GM12878 (cell line): ENCODE measurements at regions of chr22 and their contacts with region 1.

Region 1: GRCh38 chr22:33302049-33302545 is 243.9 kb upstream of the SYN3 start:
- DNase-seq: peak; percentile 39
- ATAC-seq: peak; percentile 71
- H3K4me3 ChIP-seq: no peak overlapping the region
- H3K27ac ChIP-seq: no peak overlapping the region
- H3K4me1 ChIP-seq: peaks cover 50% of the 10 kb centered on the region
- H3K27me3 ChIP-seq: no peaks in the 10 kb centered on the region
- CTCF ChIP-seq: peak; percentile 96 to 99 (median 97); a peak in 5 of 6 replicates
- EP300 ChIP-seq: no peak
- POLR2A ChIP-seq: no peak
- RAD21 ChIP-seq: peak; percentile 99

Region 2: GRCh38 chr22:33271390-33272161 is 30.5 kb before region 1 on chr22:
- CTCF ChIA-PET with region 1: interaction called, 157 read pairs
- POLR2A ChIA-PET with region 1: interaction called, 9 read pairs
- RAD21 ChIA-PET with region 1: interaction called, 167 read pairs
- SMC1A ChIA-PET with region 1: interaction called, 156 read pairs
- in situ Hi-C with region 1: no loop called
- intact Hi-C with region 1: loop called (anchors 1 kb)
- DNase-seq: peak; percentile 95
- ATAC-seq: peak; percentile 86
- H3K4me3 ChIP-seq: peak overlapping the region; percentile 3; the same call in 1 of the 2 replicates
- H3K27ac ChIP-seq: peak overlapping the region; percentile 88
- H3K4me1 ChIP-seq: peaks cover 56% of the 10 kb centered on the region
- H3K27me3 ChIP-seq: no peaks in the 10 kb centered on the region
- CTCF ChIP-seq: no peak
- EP300 ChIP-seq: peak; percentile 61 to 86; a peak in 3 of 4 replicates
- POLR2A ChIP-seq: no peak
- RAD21 ChIP-seq: 0 out of 2 replicates have a peak, but pooled peaks have one; percentile 0

Region 3: DNA sequence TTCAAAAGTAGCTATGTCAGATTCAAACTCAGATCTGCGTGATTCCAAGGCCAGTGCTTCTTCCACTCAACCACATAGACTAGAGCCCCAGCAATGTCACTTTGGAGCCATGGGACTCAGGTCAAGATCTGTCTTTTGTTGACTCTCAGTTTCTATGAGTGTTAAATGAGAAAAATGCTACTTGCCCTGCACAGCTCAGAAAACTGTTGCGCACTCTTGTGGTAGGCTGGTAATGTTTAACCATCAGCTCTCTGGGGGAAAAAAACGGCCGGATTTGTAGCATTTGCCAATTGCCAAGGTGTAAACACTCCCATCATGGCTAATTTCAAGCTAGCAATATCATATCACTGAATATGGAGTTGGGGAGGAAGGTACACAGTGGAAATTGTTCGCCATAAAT is 84.2 kb after region 1 on chr22:
- CTCF ChIA-PET with region 1: interaction called, 25 read pairs
- POLR2A ChIA-PET with region 1: no interaction called
- RAD21 ChIA-PET with region 1: interaction called, 6 read pairs
- SMC1A ChIA-PET with region 1: interaction called, 13 read pairs
- in situ Hi-C with region 1: no loop called
- intact Hi-C with region 1: loop called (anchors 2 kb)
- DNase-seq: no peak
- ATAC-seq: peak; percentile 73
- H3K4me3 ChIP-seq: no peak overlapping the region
- H3K27ac ChIP-seq: no peak overlapping the region
- H3K4me1 ChIP-seq: no peaks in the 10 kb centered on the region
- H3K27me3 ChIP-seq: no peaks in the 10 kb centered on the region
- CTCF ChIP-seq: peak in 1 of 3 experiments; percentile 8; a peak in 1 of 6 replicates
- EP300 ChIP-seq: no peak
- POLR2A ChIP-seq: no peak
- RAD21 ChIP-seq: no peak

Region 4: GRCh38 chr22:33519071-33519973 is 217.2 kb after region 1 on chr22:
- CTCF ChIA-PET with region 1: interaction called, 95 read pairs
- POLR2A ChIA-PET with region 1: no interaction called
- RAD21 ChIA-PET with region 1: interaction called, 32 read pairs
- SMC1A ChIA-PET with region 1: interaction called, 92 read pairs
- in situ Hi-C with region 1: loop called (anchors 5 kb)
- intact Hi-C with region 1: loop called (anchors 1 kb)
- DNase-seq: peak; percentile 37
- ATAC-seq: peak; percentile 78
- H3K4me3 ChIP-seq: no peak overlapping the region
- H3K27ac ChIP-seq: peak overlapping the region; percentile 45; the same call in 1 of the 2 replicates
- H3K4me1 ChIP-seq: peaks cover 27% of the 10 kb centered on the region
- H3K27me3 ChIP-seq: no peaks in the 10 kb centered on the region
- CTCF ChIP-seq: peak; percentile 50 to 61 (median 50)
- EP300 ChIP-seq: no peak
- POLR2A ChIP-seq: no peak
- RAD21 ChIP-seq: peak; percentile 86

Region 5: GRCh38 chr22:33579448-33580093 is 277.5 kb after region 1 on chr22:
- CTCF ChIA-PET with region 1: interaction called, 85 read pairs
- POLR2A ChIA-PET with region 1: no interaction called
- RAD21 ChIA-PET with region 1: interaction called, 51 read pairs
- SMC1A ChIA-PET with region 1: interaction called, 64 read pairs
- in situ Hi-C with region 1: loop called (anchors 5 kb)
- intact Hi-C with region 1: loop called (anchors 1 kb)
- DNase-seq: no peak
- ATAC-seq: peak; percentile 97
- H3K4me3 ChIP-seq: no peak overlapping the region
- H3K27ac ChIP-seq: no peak overlapping the region
- H3K4me1 ChIP-seq: peaks cover 3% of the 10 kb centered on the region; the same call in 1 of the 2 replicates
- H3K27me3 ChIP-seq: no peaks in the 10 kb centered on the region
- CTCF ChIP-seq: peak; percentile 86 to 98 (median 95)
- EP300 ChIP-seq: no peak
- POLR2A ChIP-seq: no peak
- RAD21 ChIP-seq: peak; percentile 95

Region 6: GRCh38 chr22:33593818-33594217 is 291.7 kb after region 1 on chr22:
- CTCF ChIA-PET with region 1: no interaction called
- POLR2A ChIA-PET with region 1: no interaction called
- RAD21 ChIA-PET with region 1: no interaction called
- SMC1A ChIA-PET with region 1: no interaction called
- in situ Hi-C with region 1: no loop called
- intact Hi-C with region 1: no loop called
- DNase-seq: no peak
- ATAC-seq: no peak
- H3K4me3 ChIP-seq: no peak overlapping the region
- H3K27ac ChIP-seq: no peak overlapping the region
- H3K4me1 ChIP-seq: no peaks in the 10 kb centered on the region
- H3K27me3 ChIP-seq: no peaks in the 10 kb centered on the region
- CTCF ChIP-seq: no peak
- EP300 ChIP-seq: no peak
- POLR2A ChIP-seq: no peak
- RAD21 ChIP-seq: no peak

Region 7: GRCh38 chr22:34111210-34111824 is 809.2 kb after region 1 on chr22:
- CTCF ChIA-PET with region 1: interaction called, 15 read pairs
- POLR2A ChIA-PET with region 1: no interaction called
- RAD21 ChIA-PET with region 1: interaction called, 4 read pairs
- SMC1A ChIA-PET with region 1: interaction called, 4 read pairs
- in situ Hi-C with region 1: no loop called
- intact Hi-C with region 1: loop called (anchors 5 kb)
- DNase-seq: no peak
- ATAC-seq: peak; percentile 75
- H3K4me3 ChIP-seq: no peak overlapping the region
- H3K27ac ChIP-seq: no peak overlapping the region
- H3K4me1 ChIP-seq: no peaks in the 10 kb centered on the region
- H3K27me3 ChIP-seq: no peaks in the 10 kb centered on the region
- CTCF ChIP-seq: peak; percentile 61 to 82 (median 79)
- EP300 ChIP-seq: no peak
- POLR2A ChIP-seq: no peak
- RAD21 ChIP-seq: peak; percentile 59